ENCODE measurements at regions of chr5 and their contacts with region 1.

Region 1: DNA sequence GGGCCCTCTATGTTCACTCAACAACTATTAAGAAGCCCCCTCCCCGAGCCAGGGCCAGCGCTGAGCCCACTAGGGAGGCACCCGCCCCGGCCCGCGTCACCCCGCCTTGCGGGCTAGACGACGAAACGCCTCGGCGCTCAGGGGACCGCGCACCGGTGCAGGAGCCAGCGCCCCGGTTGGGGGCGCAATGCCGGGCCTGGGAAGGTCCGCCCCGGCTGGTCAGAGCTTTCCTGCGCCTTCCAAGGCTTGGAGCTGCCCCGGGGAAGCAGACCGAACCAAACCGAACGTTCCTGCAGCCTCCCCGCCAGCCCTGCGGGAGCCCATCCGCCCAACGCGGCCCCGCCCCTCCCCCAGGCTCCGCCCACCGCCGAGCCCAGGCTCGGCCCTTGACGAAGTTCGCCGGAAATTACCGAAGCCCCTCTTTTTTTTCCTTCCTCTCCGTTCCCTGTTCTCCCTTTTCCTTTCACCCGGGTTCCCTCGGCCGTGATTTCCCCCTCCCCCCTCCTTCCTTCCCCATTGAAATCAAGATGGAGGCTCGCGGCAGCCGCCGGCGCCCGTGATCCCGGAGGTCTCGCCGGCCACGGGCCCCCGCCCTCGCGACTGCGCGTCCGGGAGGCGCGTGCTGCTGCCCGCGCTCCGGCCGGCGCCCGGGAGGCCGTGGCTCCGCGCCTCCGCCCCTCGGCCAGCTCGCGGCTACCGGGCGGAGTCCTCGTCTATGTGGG is at the start of gene TRIO:
- DNase-seq: peak; percentile 80 to 100
- H3K4me3 ChIP-seq: peak within 1 kb of the TSS; percentile 99
- H3K27ac ChIP-seq: peak within 1 kb of the TSS; percentile 78
- H3K4me1 ChIP-seq: peaks cover 40% of the 10 kb centered on the region
- H3K27me3 ChIP-seq: no peaks in the 10 kb centered on the region
- CTCF ChIP-seq: peak; percentile 68
- total RNA-seq, gene TRIO: 596 and 756 TPM in 2 replicates

Region 2: GRCh38 chr5:14011089-14012004 is 131.6 kb before region 1 on chr5:
- CTCF ChIA-PET with region 1: no interaction called
- POLR2A ChIA-PET with region 1: interaction called, 8 read pairs
- intact Hi-C with region 1: loop called (anchors 1 kb)
- DNase-seq: peak; percentile 87 to 100
- H3K4me3 ChIP-seq: peak overlapping the region; percentile 63
- H3K27ac ChIP-seq: peak overlapping the region; percentile 75
- H3K4me1 ChIP-seq: peaks cover 40% of the 10 kb centered on the region
- H3K27me3 ChIP-seq: no peaks in the 10 kb centered on the region
- CTCF ChIP-seq: no peak

Region 3: DNA sequence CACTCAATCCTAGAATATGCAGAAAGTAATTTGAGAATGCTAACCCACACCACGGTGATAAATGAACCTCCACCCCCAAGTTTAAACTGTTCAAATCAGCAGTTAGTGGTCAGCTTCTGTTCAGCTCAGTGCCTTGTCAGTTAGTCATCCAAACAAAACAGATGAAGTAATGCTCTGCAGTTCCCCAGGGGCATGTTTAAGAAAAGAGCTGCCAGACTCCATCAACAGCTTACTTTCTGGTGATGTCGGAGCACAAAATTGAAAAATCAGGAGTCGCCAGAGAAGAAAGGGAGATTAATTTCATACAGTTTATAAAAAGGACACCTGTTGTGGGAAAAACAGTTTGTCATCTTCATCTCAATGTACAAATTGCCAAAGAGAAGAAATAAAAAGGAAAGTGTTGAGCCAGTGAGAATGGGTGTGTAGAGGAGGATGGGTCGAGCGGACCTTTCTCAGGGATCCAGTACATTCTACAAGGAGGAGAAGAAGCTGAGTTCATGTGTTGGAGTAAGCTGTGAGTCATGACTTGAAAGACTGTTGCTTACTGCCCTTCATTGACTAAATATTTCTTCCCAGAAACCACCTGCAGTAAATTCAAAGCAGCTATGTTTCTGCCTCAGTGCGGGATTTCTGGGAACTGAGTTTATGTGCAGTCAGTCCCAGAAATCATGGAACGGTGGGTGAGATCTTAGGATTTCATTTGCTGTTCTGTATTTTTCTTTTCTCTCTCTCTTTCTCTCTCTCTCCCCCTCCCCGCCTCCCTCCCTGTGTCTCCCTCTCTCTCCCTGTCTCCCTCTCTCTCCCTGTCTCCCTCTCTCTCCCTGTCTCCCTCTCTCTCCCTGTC is 13.9 kb after region 1 on chr5:
- CTCF ChIA-PET with region 1: interaction called, 5 read pairs
- POLR2A ChIA-PET with region 1: interaction called, 45 read pairs
- intact Hi-C with region 1: loop called (anchors 1 kb)
- DNase-seq: peak; percentile 83 to 99
- H3K4me3 ChIP-seq: peak overlapping the region; percentile 45; the same call in 1 of the 2 replicates
- H3K27ac ChIP-seq: peak overlapping the region; percentile 87
- H3K4me1 ChIP-seq: peaks cover 76% of the 10 kb centered on the region
- H3K27me3 ChIP-seq: no peaks in the 10 kb centered on the region
- CTCF ChIP-seq: no peak; the same call in 1 of the 2 replicates

Region 4: DNA sequence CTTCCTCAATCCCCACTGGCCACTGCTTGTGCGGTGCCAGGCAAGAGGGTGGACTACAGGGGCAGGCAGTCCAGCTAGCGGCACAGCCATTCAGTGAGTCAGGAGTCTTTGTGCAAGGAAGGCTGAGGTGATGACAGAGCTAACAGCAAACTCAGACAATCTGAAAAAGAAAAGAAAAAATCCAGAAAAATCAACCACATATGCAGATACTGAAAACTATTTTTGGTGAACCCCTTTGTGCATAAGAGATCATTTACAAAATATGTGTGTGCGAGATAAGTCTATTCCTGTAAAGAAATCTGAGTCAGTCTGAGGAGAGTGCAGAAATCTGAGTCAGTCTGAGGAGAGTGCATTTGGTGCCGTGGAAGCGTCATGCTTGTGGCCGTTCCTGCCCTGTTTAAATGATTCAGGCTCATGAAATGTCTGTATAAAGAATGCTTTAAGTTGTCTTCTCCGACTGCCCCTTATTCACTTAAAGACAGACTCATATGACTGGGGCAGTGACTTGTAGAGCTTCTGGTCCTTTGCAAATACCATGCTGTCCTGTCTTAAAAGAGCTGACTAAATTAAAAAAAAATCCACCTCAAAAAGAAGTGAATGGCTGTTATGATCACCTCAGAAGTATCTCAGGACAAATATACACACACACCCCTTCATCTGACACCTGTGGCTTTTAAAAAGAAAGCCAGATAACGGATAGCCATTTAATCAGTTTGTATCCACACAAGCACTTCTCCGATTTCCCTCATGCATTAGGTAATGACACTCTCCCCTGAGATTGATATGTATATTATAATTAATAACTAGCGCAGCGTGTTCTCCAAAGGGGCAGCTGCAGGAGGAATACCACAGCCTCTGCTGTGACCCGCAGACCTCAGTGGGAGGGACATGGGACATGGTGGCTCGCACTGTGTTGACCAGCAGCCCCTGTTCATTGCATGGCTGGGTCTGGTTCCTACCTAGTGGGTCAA is 47.5 kb after region 1 on chr5:
- CTCF ChIA-PET with region 1: interaction called, 4 read pairs
- POLR2A ChIA-PET with region 1: interaction called, 31 read pairs
- intact Hi-C with region 1: loop called (anchors 1 kb)
- DNase-seq: peak; percentile 87 to 98
- H3K4me3 ChIP-seq: peak overlapping the region; percentile 30; the same call in 1 of the 2 replicates
- H3K27ac ChIP-seq: peak overlapping the region; percentile 92
- H3K4me1 ChIP-seq: peaks cover 79% of the 10 kb centered on the region
- H3K27me3 ChIP-seq: no peaks in the 10 kb centered on the region
- CTCF ChIP-seq: no peak

Region 5: DNA sequence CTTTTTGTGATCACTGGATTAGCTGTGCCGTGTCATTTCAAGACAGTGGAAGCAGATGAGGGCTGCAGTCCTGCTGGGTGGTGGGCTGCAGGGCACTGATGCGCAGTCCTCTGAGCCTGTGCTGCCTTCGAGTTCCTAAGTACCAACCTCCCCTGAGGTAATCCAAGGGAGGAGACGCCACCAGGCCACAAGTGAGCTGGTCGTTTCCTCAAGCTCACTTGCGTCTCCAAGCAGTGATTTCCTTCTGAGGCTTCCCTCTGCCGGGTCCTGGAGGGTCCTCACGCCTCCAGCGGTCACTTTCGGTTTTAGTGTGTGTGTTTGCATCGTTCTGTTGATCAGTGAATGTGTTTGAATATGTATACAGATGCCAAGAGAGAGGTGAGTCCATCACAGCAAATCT is 115.9 kb after region 1 on chr5:
- CTCF ChIA-PET with region 1: no interaction called
- POLR2A ChIA-PET with region 1: interaction called, 18 read pairs
- intact Hi-C with region 1: no loop called
- DNase-seq: no peak
- H3K4me3 ChIP-seq: no peak overlapping the region
- H3K27ac ChIP-seq: no peak overlapping the region
- H3K4me1 ChIP-seq: peaks cover 6% of the 10 kb centered on the region
- H3K27me3 ChIP-seq: no peaks in the 10 kb centered on the region
- CTCF ChIP-seq: no peak

Region 6: GRCh38 chr5:14305045-14305444 is 162.1 kb after region 1 on chr5:
- CTCF ChIA-PET with region 1: no interaction called
- POLR2A ChIA-PET with region 1: interaction called, 13 read pairs
- intact Hi-C with region 1: no loop called
- DNase-seq: peak; percentile 49 to 67
- H3K4me3 ChIP-seq: no peak overlapping the region
- H3K27ac ChIP-seq: no peak overlapping the region
- H3K4me1 ChIP-seq: no peaks in the 10 kb centered on the region
- H3K27me3 ChIP-seq: no peaks in the 10 kb centered on the region
- CTCF ChIP-seq: no peak